ENCODE measurements at regions of chr9 and their contacts with region 1.

Region 1: DNA sequence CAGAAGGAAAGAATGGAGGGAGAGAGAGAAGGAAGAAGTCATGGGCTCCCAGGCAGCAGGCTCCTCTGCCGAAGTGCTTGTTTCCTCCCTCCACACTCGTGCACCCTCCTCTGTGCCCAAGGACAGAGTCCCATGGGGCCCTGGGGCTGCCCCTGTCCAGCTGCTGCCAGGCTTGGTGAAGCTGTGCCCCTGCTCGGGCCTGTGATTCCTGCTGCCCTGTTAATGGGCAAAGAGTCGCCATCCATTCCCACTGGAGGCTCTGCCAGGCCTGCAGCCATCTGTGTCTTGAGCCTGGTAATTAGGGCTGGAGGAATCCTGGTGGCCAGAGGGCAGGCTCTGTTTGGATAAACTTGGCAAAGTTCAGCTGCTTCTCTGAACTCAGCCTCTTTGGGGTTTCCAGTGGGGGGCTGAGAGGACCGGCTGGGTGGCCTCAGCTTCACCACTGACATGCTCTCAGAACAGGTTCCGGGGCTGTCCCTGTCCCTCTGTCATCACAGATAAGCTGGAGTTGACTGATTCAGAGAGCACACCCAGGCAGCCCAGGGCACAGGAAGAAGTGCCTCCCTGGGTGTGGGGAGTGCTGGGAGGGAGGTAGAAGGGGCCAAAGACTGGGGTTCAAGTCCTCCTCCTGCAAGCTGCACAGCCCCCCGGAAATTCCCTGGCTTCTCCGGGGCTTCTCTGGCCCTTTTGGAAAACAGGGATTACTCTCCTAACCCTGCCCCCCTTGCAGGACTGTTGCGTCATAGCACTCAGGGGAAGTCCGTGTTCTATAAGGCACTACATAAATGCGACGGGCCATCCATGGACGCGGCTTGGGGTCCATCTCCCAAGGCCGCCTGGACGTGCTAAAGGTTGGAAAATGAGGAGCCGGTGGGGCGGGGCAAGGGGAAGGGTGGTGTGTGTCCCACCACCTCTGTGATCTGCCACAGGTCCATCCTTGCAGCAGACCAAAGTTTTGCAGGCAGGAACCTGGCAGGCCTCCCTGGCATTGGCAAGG is 154.8 kb downstream of the PAX5 start:
- DNase-seq: no peak
- H3K4me3 ChIP-seq: no peak overlapping the region
- H3K27ac ChIP-seq: no peak overlapping the region
- H3K4me1 ChIP-seq: no peaks in the 10 kb centered on the region
- H3K27me3 ChIP-seq: no peaks in the 10 kb centered on the region
- CTCF ChIP-seq: no peak

Region 2: DNA sequence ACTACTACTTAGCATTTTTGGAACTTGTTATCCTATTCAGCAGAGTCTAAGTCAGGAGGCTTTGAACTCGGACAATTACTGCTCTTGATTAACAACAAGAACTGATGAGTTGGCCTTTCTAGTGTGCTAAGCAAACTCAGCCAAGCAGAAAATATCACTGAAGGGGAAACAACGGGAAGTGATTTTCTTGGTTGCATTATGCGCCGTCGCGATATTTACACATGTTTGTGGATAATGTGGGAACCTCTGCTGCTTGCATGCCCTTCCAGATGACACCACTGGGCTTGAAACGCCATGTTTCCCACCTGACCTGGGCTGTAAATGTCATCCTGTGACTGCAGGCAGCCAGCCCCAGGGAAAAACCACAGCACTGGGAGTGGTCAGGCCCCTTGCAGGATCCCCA is 50.7 kb before region 1 on chr9:
- CTCF ChIA-PET with region 1: no interaction called
- dilution Hi-C with region 1: no loop called
- in situ Hi-C with region 1: loop called in 1 of 2 experiments (anchors 10 kb)
- intact Hi-C with region 1: no loop called
- DNase-seq: no peak
- H3K4me3 ChIP-seq: no peak overlapping the region
- H3K27ac ChIP-seq: no peak overlapping the region
- H3K4me1 ChIP-seq: no peaks in the 10 kb centered on the region
- H3K27me3 ChIP-seq: peaks cover 5% of the 10 kb centered on the region
- CTCF ChIP-seq: no peak

Region 3: DNA sequence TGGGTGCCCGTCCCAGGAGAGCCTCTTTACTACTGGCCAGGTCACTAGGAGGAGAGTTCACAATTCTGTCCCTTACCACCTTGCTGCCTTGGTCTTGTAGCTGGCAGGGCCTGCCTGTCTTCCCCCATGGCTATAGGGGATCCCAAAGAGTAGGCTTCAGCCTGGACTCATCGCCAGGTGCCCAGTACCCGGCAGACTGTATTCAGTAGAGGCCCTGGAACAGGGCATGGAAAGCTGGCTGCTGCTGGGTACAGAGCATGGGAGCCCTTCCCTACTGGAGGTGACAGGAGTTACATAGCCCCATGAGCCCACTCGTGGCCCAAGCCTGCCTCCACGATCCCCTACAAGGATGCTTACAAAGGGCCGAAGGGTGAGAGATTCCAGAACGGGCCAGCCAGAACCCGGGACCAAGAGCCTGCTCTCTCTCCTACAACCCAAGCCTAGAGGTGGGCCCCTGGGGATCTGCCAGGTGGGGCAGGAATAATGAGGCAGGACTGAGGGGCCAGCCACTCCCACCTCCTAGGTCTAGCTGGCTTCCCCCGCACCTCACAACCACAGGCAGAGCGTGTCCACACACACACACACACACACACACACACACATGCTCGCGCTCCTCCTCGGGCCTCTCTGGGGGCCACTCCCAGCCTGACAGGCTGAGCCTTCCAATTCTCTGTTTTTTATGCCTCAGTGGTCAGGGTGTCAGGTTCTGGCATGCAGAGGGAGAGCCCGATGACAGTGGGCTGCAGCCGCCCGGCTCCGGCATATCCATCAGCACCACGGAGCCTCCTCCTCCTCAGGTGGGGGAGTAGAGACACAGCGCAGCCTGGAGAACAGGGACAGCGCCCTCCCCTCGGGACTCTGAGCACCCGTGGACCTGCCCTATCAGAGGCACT is 31.3 kb before region 1 on chr9:
- CTCF ChIA-PET with region 1: no interaction called
- dilution Hi-C with region 1: no loop called
- in situ Hi-C with region 1: no loop called
- intact Hi-C with region 1: no loop called
- DNase-seq: peak; percentile 21
- H3K4me3 ChIP-seq: no peak overlapping the region
- H3K27ac ChIP-seq: no peak overlapping the region
- H3K4me1 ChIP-seq: no peaks in the 10 kb centered on the region
- H3K27me3 ChIP-seq: peaks cover 7% of the 10 kb centered on the region
- CTCF ChIP-seq: no peak

Region 4: GRCh38 chr9:37371565-37372464 is 492.5 kb after region 1 on chr9:
- CTCF ChIA-PET with region 1: no interaction called
- dilution Hi-C with region 1: no loop called
- in situ Hi-C with region 1: loop called (anchors 25 kb)
- intact Hi-C with region 1: no loop called
- DNase-seq: no peak
- H3K4me3 ChIP-seq: no peak overlapping the region
- H3K27ac ChIP-seq: no peak overlapping the region
- H3K4me1 ChIP-seq: no peaks in the 10 kb centered on the region
- H3K27me3 ChIP-seq: no peaks in the 10 kb centered on the region
- CTCF ChIP-seq: no peak

Measured in mammary epithelial cell (primary cell).